IMR-90 (cell line): ENCODE measurements at regions of chr1 and their contacts with region 1.

Region 1: GRCh38 chr1:169928438-169929209 is 34.9 kb upstream of the SCYL3 start:
- DNase-seq: peak; percentile 72
- ATAC-seq: peak; percentile 80; the same call in 1 of the 2 replicates
- H3K4me3 ChIP-seq: no peak overlapping the region
- H3K27ac ChIP-seq: no peak overlapping the region
- H3K4me1 ChIP-seq: no peaks in the 10 kb centered on the region; the same call in 1 of the 2 replicates
- H3K27me3 ChIP-seq: no peaks in the 10 kb centered on the region
- CTCF ChIP-seq: peak; percentile 87
- POLR2A ChIP-seq: peak; percentile 38; the same call in 1 of the 2 replicates
- RAD21 ChIP-seq: peak; percentile 90

Region 2: GRCh38 chr1:169906938-169907337 is 21.7 kb before region 1 on chr1:
- CTCF ChIA-PET with region 1: no interaction called
- POLR2A ChIA-PET with region 1: interaction called, 21 read pairs
- dilution Hi-C with region 1: no loop called
- in situ Hi-C with region 1: no loop called
- intact Hi-C with region 1: no loop called
- DNase-seq: no peak
- ATAC-seq: no peak
- H3K4me3 ChIP-seq: no peak overlapping the region
- H3K27ac ChIP-seq: no peak overlapping the region
- H3K4me1 ChIP-seq: no peaks in the 10 kb centered on the region
- H3K27me3 ChIP-seq: no peaks in the 10 kb centered on the region; the same call in 1 of the 2 replicates
- CTCF ChIP-seq: no peak
- POLR2A ChIP-seq: no peak
- RAD21 ChIP-seq: no peak

Region 3: DNA sequence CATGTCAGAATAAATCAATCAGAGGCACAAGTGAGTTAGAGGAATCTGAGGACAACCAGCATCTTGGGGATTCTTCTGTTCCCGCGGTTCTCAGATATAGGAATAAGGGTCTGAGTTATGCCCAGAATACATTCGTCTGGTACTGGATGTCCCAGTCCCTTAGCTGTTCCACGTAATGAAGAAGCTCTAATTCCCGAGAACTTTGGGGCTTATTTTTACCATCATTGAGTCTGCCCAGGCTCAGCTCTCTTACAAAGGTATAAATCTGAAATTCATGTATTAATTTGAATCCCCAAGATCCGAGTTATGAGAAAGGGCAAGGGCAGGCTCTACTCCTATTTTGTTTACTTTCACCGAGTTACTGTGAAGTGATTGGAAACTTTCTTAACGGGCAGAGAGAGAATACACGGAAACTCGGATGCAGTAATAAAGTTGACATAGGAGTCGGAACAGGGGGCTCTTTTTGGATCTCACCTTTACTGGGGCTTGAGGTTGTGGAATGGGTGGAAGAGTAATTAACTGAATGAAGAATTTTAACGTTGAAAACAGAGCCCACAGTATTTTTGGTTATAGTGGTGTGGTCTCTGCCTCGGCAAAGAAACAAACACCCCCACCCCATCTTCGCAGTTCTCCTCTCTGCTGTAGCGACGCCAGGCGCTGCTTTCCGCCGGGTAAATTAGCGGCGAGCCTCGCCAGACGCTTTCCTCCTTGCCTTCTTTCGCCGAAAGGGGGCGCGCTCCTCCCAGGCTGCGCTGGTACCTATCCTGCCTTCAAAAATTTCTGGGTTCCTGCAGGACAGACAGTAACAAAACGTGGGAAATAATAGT is 742.4 kb after region 1 on chr1:
- CTCF ChIA-PET with region 1: no interaction called
- POLR2A ChIA-PET with region 1: no interaction called
- dilution Hi-C with region 1: no loop called
- in situ Hi-C with region 1: loop called (anchors 25 kb)
- intact Hi-C with region 1: no loop called
- DNase-seq: peak; percentile 37
- ATAC-seq: peak; percentile 45; the same call in 1 of the 2 replicates
- H3K4me3 ChIP-seq: peak overlapping the region; percentile 39; the same call in 1 of the 2 replicates
- H3K27ac ChIP-seq: no peak overlapping the region
- H3K4me1 ChIP-seq: peaks cover 9% of the 10 kb centered on the region
- H3K27me3 ChIP-seq: no peaks in the 10 kb centered on the region
- CTCF ChIP-seq: peak; percentile 74
- POLR2A ChIP-seq: no peak
- RAD21 ChIP-seq: peak; percentile 76

Region 4: GRCh38 chr1:170881268-170882265 is 952.9 kb after region 1 on chr1:
- CTCF ChIA-PET with region 1: no interaction called
- POLR2A ChIA-PET with region 1: no interaction called
- dilution Hi-C with region 1: no loop called
- in situ Hi-C with region 1: no loop called
- intact Hi-C with region 1: loop called (anchors 5 kb)
- DNase-seq: peak; percentile 42
- ATAC-seq: peak; percentile 63
- H3K4me3 ChIP-seq: no peak overlapping the region
- H3K27ac ChIP-seq: no peak overlapping the region
- H3K4me1 ChIP-seq: no peaks in the 10 kb centered on the region
- H3K27me3 ChIP-seq: no peaks in the 10 kb centered on the region
- CTCF ChIP-seq: peak; percentile 52
- POLR2A ChIP-seq: no peak
- RAD21 ChIP-seq: peak; percentile 74

Region 5: DNA sequence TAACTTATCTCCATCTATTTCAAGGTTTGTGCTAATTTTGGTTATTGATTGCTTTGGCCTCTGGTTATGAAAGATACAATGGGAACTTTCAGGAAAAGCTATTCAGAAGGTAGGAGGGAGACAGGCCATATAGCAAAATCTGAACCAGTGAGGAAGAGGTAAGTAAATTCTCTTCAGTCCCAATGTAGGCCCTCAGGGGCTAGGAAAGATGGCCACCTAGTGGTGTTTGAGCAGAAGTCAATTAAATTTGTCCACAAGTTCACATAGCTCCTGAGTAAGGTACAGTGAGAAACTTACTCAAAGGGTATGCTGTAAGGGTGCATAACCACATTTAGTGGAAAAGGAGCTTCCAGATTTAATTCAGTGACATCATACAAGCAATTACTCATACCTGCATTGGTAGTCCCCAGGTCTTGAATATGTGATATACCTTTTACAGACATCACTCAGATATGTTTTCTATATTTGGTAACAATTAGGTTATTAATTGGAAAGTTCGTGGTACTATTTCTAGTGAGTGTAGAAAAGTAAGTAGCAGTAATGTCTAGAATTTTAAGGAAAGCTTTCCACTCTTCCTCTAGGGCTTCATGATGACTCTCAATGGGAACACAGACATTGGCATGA is 1298.2 kb after region 1 on chr1:
- CTCF ChIA-PET with region 1: no interaction called
- POLR2A ChIA-PET with region 1: no interaction called
- dilution Hi-C with region 1: no loop called
- in situ Hi-C with region 1: no loop called
- intact Hi-C with region 1: loop called (anchors 10 kb)
- DNase-seq: peak; percentile 80
- ATAC-seq: peak; percentile 93
- H3K4me3 ChIP-seq: no peak overlapping the region
- H3K27ac ChIP-seq: no peak overlapping the region
- H3K4me1 ChIP-seq: peaks cover 2% of the 10 kb centered on the region
- H3K27me3 ChIP-seq: no peaks in the 10 kb centered on the region
- CTCF ChIP-seq: peak; percentile 95
- POLR2A ChIP-seq: no peak
- RAD21 ChIP-seq: peak; percentile 99